ENCODE measurements at regions of chr20 and their contacts with region 1.

Region 1: DNA sequence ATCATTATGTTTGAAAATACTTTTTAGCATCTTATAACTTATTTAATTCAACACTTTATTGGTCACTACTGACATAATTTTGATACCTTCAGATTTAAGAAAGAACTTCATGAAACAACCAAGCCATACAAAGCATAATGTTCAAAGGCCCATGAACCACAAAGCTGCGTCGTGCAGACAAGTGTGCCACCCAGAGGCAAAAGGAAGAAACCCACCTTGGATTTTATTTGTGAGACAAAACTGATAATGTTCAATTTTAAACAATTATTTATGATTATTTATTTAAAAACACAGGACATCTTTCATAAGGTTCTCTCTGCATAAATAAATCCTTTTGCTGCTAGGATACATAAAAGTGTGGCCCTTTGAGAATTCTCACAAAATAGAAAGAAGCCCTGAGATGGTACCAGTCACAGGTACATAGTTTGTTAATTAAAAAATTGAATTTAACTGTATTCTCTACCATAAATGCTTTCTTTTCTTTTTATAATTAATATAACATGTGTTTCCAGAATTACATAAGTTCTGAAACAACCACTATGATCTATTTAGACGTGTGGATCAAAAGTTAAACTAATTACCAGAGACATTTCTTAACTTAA is 143.7 kb downstream of the RALGAPA2 start:
- DNase-seq: no peak
- H3K4me3 ChIP-seq: no peak overlapping the region
- H3K27ac ChIP-seq: no peak overlapping the region
- H3K4me1 ChIP-seq: no peaks in the 10 kb centered on the region
- H3K27me3 ChIP-seq: no peaks in the 10 kb centered on the region
- CTCF ChIP-seq: peak; percentile 77

Region 2: GRCh38 chr20:20083807-20084206 is 484.9 kb before region 1 on chr20:
- CTCF ChIA-PET with region 1: no interaction called
- dilution Hi-C with region 1: no loop called
- in situ Hi-C with region 1: loop called in 1 of 2 experiments (anchors 25 kb)
- intact Hi-C with region 1: loop called (anchors 1 kb)
- DNase-seq: peak; percentile 23
- H3K4me3 ChIP-seq: peak overlapping the region in 1 of 3 experiments; percentile 17
- H3K27ac ChIP-seq: no peak overlapping the region
- H3K4me1 ChIP-seq: peaks cover 15% of the 10 kb centered on the region
- H3K27me3 ChIP-seq: peaks cover 1% of the 10 kb centered on the region
- CTCF ChIP-seq: peak; percentile 40 to 44

Region 3: DNA sequence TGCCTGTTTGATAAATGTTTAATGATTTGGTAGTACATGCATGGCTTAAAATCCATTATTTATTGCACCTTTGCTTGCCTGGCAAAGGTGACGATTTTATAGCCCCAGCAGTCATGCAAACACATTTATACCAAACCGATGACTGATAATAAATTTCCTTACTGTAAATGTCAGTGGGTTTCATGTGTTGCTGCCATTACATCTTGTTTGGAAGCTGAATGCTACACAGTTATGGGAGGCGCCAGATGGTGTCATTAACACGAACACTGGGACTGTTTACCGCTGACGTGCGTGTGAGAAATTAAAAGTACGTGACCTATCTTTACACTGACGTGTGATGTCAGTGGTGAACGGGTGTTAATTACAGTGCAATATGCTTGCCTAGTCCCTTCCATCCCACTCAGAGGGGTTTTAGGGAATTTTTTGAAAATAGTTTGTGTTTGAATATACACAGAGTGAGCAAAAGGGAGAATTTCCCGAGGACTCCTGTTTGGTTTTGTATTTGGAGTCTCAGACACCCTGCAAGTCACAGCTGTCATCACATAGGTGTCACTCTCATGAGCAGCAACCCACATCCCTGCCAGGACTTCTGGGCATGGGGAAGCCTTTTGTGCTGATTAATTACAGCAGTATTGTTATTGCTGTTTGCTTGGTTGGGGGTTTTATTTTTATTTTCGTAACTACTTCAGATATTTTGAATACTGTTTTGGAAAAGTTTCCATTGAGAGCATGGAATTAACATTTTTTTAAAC is 352.6 kb before region 1 on chr20:
- CTCF ChIA-PET with region 1: no interaction called
- dilution Hi-C with region 1: no loop called
- in situ Hi-C with region 1: no loop called
- intact Hi-C with region 1: no loop called
- DNase-seq: no peak
- H3K4me3 ChIP-seq: no peak overlapping the region
- H3K27ac ChIP-seq: no peak overlapping the region
- H3K4me1 ChIP-seq: no peaks in the 10 kb centered on the region
- H3K27me3 ChIP-seq: no peaks in the 10 kb centered on the region
- CTCF ChIP-seq: no peak

Region 4: DNA sequence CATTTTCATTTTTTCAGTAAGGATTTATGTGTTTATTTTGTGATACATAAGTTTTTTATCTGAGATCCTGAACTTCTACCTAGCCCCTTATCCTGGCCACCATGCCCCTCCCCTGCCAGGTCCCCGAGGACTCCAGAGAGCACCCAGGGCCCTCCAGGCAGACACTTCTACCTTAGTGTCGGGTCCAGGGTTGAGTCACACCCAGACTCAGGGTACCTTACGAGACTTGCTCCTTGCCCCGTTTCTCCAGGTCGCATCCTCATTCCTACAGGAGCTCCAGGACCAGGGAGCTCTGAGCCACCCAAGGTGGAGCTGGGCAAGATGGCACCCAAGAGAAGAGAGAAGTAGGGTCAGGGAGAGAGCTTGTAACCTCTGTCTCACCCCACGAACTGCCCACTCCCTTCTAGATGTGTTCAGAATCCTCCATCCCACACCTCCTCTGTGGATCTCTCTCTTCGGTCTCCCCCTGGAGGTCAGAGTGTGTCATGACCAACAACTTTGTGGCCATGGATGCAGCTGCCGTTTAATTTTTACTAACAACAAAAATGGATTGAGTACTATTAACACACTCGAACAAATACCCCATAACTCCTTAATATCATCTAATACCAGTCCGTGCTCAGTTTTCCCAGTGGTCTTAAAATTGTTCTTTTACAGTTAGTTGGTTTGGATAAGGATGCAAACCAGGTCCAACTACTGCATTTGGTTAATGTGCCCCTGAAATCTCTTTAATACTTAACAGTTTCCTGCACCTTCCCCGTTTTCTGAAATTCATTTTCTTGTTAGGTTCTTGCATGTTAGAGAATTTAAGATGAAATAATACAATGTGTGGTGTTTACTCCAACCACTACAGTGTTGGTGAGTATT is 331.4 kb before region 1 on chr20:
- CTCF ChIA-PET with region 1: no interaction called
- dilution Hi-C with region 1: no loop called
- in situ Hi-C with region 1: no loop called
- intact Hi-C with region 1: loop called (anchors 10 kb)
- DNase-seq: peak; percentile 29
- H3K4me3 ChIP-seq: no peak overlapping the region
- H3K27ac ChIP-seq: no peak overlapping the region
- H3K4me1 ChIP-seq: no peaks in the 10 kb centered on the region
- H3K27me3 ChIP-seq: peaks cover 3% of the 10 kb centered on the region
- CTCF ChIP-seq: peak; percentile 73 to 83

Region 5: GRCh38 chr20:20452254-20452676 is 116.4 kb before region 1 on chr20:
- CTCF ChIA-PET with region 1: no interaction called
- dilution Hi-C with region 1: no loop called
- in situ Hi-C with region 1: no loop called
- intact Hi-C with region 1: loop called (anchors 5 kb)
- DNase-seq: peak; percentile 64
- H3K4me3 ChIP-seq: no peak overlapping the region
- H3K27ac ChIP-seq: no peak overlapping the region
- H3K4me1 ChIP-seq: peaks cover 9% of the 10 kb centered on the region
- H3K27me3 ChIP-seq: no peaks in the 10 kb centered on the region
- CTCF ChIP-seq: no peak

Region 6: DNA sequence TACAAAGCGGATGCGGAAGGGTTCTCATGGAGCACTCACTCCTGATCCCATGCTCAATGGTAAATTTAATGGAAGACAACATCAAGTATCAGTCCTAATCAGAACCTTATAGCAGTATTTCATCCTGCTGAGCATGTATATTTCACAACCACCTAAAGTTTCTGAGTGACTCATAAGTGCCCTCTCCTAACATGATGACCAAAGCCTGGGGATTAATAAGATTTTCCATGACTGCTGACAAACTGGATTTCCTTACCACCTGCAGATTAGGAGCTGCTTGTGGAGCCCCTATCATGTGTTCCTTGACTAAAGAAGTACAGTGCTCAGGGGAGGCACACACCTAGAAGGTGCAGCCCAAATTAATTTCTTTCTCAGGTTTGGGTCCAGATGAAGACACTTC is 88.0 kb before region 1 on chr20:
- CTCF ChIA-PET with region 1: no interaction called
- dilution Hi-C with region 1: no loop called
- in situ Hi-C with region 1: no loop called
- intact Hi-C with region 1: loop called (anchors 5 kb)
- DNase-seq: peak; percentile 79
- H3K4me3 ChIP-seq: no peak overlapping the region
- H3K27ac ChIP-seq: peak overlapping the region; percentile 45
- H3K4me1 ChIP-seq: peaks cover 10% of the 10 kb centered on the region
- H3K27me3 ChIP-seq: no peaks in the 10 kb centered on the region
- CTCF ChIP-seq: no peak

Measured in mammary epithelial cell (primary cell).